ENCODE measurements at regions of chrX and their contacts with region 1.

Region 1: GRCh38 chrX:47658684-47659515 is at the start of gene UXT:
- DNase-seq: peak; percentile 96
- ATAC-seq: peak; percentile 83
- H3K4me3 Mint-ChIP-seq: peak within 1 kb of the TSS; percentile 86
- H3K27ac Mint-ChIP-seq: peak within 1 kb of the TSS; percentile 94
- H3K4me1 Mint-ChIP-seq: peaks cover 52% of the 10 kb centered on the region
- H3K27me3 Mint-ChIP-seq: no peaks in the 10 kb centered on the region
- total RNA-seq, gene UXT: 195 to 210 TPM

Region 2: DNA sequence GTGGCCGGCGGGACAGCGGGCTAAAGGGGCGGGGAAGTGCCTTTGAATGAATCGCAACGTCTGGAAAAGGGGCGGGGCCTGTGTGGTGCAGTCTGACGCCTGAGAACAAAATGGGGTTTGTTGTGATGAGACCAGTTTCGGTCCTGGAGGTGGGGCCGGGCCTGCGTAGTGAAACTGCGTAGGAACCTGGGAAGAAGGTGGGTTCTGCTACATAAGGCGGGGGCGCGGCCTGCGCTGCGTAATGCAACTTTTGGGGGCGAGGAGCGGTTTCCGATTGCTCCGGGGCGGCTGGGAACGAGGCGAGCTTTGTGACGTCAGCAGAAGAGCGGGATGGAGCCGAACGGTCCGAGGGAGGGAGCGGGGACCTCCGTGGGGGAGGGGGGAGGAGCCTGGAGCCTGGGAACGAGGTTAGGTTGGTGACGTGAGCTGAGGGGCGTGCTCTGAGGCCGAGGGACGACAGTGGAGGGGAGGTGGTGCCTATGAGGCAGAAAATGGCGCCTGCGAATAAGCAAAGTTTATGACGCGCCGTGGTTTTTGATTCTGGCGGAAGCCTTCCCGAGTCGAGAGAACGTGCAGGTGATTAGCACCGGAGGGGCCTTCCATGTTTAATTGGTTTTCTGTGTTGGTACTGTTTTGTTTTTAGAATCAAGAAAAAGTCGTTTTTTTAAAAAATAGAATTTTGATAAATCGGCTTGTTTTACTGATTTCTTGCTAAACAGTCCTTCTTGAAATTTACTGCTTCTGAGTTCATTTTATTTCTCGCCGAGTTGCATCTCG is 425.4 kb before region 1 on chrX:
- CTCF ChIA-PET with region 1: no interaction called
- POLR2A ChIA-PET with region 1: interaction called, 3 read pairs
- intact Hi-C with region 1: loop called in 1 of 2 experiments (anchors 1 kb)
- DNase-seq: peak; percentile 96
- ATAC-seq: peak; percentile 89
- H3K4me3 Mint-ChIP-seq: peak overlapping the region; percentile 77
- H3K27ac Mint-ChIP-seq: peak overlapping the region; percentile 95
- H3K4me1 Mint-ChIP-seq: peaks cover 23% of the 10 kb centered on the region
- H3K27me3 Mint-ChIP-seq: no peaks in the 10 kb centered on the region

Region 3: GRCh38 chrX:47581731-47582647 is 76.9 kb before region 1 on chrX and contains the start of gene TIMP1:
- CTCF ChIA-PET with region 1: interaction called, 6 read pairs
- POLR2A ChIA-PET with region 1: no interaction called
- intact Hi-C with region 1: loop called in 1 of 2 experiments (anchors 1 kb)
- DNase-seq: peak; percentile 90
- ATAC-seq: peak; percentile 86
- H3K4me3 Mint-ChIP-seq: peak within 1 kb of the TSS; percentile 46
- H3K27ac Mint-ChIP-seq: peak within 1 kb of the TSS; percentile 81
- H3K4me1 Mint-ChIP-seq: peaks cover 50% of the 10 kb centered on the region
- H3K27me3 Mint-ChIP-seq: peaks cover 3% of the 10 kb centered on the region
- total RNA-seq, gene TIMP1: 40.3 to 48.4 TPM

Region 4: GRCh38 chrX:47836164-47837072 is 177.5 kb after region 1 on chrX and contains the start of gene ZNF81:
- CTCF ChIA-PET with region 1: no interaction called
- POLR2A ChIA-PET with region 1: no interaction called
- intact Hi-C with region 1: loop called in 1 of 2 experiments (anchors 1 kb)
- DNase-seq: peak; percentile 93
- ATAC-seq: peak; percentile 92
- H3K4me3 Mint-ChIP-seq: peak within 1 kb of the TSS; percentile 95
- H3K27ac Mint-ChIP-seq: peak within 1 kb of the TSS; percentile 97
- H3K4me1 Mint-ChIP-seq: peaks cover 23% of the 10 kb centered on the region
- H3K27me3 Mint-ChIP-seq: no peaks in the 10 kb centered on the region
- total RNA-seq, gene ZNF81: 5.3 to 6.4 TPM

Region 5: GRCh38 chrX:48165246-48165645 is 506.3 kb after region 1 on chrX:
- CTCF ChIA-PET with region 1: no interaction called
- POLR2A ChIA-PET with region 1: no interaction called
- intact Hi-C with region 1: no loop called
- DNase-seq: no peak
- ATAC-seq: no peak
- H3K4me3 Mint-ChIP-seq: no peak overlapping the region
- H3K27ac Mint-ChIP-seq: no peak overlapping the region
- H3K4me1 Mint-ChIP-seq: no peaks in the 10 kb centered on the region
- H3K27me3 Mint-ChIP-seq: peaks cover 2% of the 10 kb centered on the region